Endothelial cell of umbilical vein (primary cell): ENCODE measurements at regions of chr2 and their contacts with region 1.

Region 1: DNA sequence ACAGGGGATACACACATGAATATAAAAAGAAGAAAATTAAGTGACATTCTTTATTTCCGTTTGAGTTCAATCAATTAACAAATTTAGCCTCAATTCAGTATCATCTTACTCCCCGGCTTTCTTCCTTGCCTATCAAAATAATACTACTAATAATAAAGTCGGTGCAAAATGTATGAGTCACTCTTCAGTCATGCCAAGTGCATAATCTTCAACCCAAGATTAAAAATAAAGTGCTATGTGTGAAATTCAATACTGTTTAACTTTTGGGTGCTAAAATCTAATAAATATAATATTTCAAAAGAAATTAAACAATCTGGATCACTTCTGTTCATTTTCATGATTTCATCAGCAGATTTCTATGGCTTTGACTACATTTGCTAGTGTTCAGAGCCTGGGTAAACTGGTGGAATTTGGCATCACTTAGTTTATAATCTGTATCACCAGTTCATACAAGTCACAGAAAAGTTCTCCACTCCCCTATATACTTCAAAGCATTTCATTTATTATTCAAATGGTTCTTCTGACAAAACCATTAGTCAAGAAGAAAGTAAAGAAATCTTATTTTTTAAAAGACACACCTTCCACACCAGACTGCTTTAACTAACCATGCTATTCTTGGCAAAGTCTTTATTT is 183.6 kb downstream of the THADA start:
- DNase-seq: peak; percentile 74
- H3K4me3 ChIP-seq: no peak overlapping the region
- H3K27ac ChIP-seq: no peak overlapping the region
- H3K4me1 ChIP-seq: peaks cover 22% of the 10 kb centered on the region
- H3K27me3 ChIP-seq: no peaks in the 10 kb centered on the region
- CTCF ChIP-seq: no peak
- POLR2A ChIP-seq: no peak

Region 2: GRCh38 chr2:43426305-43427031 is 14.2 kb after region 1 on chr2:
- CTCF ChIA-PET with region 1: interaction called, 3 read pairs
- POLR2A ChIA-PET with region 1: no interaction called
- dilution Hi-C with region 1: no loop called
- intact Hi-C with region 1: loop called (anchors 1 kb)
- DNase-seq: peak; percentile 97
- H3K4me3 ChIP-seq: no peak overlapping the region
- H3K27ac ChIP-seq: peak overlapping the region; percentile 65
- H3K4me1 ChIP-seq: peaks cover 17% of the 10 kb centered on the region
- H3K27me3 ChIP-seq: no peaks in the 10 kb centered on the region
- CTCF ChIP-seq: no peak
- POLR2A ChIP-seq: peak; percentile 23